Stomach (tissue), 19 donors: ENCODE measurements at regions of chr1 and their contacts with region 1.

Region 1: DNA sequence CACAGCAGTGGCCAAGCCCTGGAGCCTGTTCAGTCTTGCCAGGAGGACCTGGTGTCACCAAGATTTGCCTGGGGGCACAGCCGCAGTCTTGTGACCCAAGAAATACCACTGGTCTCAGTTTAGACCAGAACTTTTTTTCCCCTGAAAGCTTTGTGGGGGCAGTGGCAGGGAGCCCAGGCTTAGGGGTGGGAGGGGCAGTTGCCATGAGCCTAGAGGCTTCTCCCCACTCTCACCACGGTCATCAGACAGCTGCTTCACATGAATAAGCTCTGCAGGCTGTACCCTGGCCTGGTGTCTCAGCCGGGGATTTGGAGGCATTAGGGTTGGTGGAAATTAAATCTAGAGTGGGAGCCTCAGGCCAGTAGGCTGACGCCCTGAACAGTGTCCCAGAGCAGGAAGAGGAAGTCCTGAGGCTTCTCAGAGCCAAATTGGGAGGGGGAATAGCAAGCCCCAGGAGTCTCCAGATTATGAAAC is 73.7 kb downstream of the SLC16A1 start:
- DNase-seq: peak in 1 of 2 donors; percentile 29
- H3K4me3 ChIP-seq: no peak overlapping the region
- H3K27ac ChIP-seq: peak overlapping the region; percentile 61 to 79 (median 69)
- H3K4me1 ChIP-seq: peaks cover 8 to 18% (median 11%) of the 10 kb centered on the region in 4 donors
- H3K27me3 ChIP-seq: no peaks in the 10 kb centered on the region
- CTCF ChIP-seq: no peak
- EP300 ChIP-seq: no peak
- POLR2A ChIP-seq: no peak

Region 2: DNA sequence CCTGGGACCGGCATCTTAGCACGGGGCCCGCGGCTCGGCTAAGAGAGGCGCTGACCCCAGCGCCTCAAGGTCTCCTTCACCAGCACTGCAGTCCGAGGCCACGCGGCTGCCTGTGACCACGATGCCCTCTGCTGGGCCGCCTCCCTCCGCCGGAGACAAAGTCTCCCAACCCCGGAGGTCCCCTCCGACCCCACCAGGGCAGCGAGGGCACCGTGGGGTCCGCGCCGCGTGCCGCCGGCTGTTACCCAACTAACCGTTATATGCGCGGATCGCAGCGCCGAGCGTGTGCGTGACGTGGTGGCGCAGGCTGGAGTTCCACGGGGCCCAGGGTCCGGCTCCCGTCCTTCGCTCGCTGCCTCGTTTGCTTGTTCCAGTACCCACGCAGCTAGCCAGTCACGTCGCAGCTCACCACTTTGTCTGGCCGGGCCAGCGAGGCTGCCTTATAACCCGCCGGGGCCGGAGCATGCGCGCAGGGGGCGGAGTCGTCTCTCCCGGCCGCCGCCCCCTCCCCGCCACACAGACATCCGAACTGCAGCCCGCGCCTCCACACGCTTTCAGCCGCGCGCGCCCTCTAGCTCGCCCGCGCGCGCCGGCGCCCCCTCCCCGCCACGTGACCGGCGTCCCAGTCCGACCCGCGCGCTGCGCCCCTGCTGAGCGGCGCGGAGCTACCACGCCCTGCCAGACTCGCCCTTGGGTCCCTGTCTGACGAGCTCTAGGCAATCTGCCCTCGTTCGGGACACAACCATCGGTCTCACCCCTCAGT is 73.7 kb after region 1 on chr1 and contains the start of gene SLC16A1:
- intact Hi-C with region 1: loop called (anchors 10 kb)
- DNase-seq: peak; percentile 88 to 97
- H3K4me3 ChIP-seq: peak within 1 kb of the TSS; percentile 75 to 83 (median 80)
- H3K27ac ChIP-seq: peak within 1 kb of the TSS; percentile 64 to 94 (median 88)
- H3K4me1 ChIP-seq: peaks cover 0 to 77% (median 40%) of the 10 kb centered on the region in 4 donors
- H3K27me3 ChIP-seq: no peaks in the 10 kb centered on the region
- CTCF ChIP-seq: peak in 3 of 7 experiments; percentile 3 to 35 (median 24)
- EP300 ChIP-seq: no peak
- POLR2A ChIP-seq: peak in 2 of 4 donors; percentile 18 to 29
- total RNA-seq, gene SLC16A1: 12.5 to 127 (median 32.6) TPM

Region 3: DNA sequence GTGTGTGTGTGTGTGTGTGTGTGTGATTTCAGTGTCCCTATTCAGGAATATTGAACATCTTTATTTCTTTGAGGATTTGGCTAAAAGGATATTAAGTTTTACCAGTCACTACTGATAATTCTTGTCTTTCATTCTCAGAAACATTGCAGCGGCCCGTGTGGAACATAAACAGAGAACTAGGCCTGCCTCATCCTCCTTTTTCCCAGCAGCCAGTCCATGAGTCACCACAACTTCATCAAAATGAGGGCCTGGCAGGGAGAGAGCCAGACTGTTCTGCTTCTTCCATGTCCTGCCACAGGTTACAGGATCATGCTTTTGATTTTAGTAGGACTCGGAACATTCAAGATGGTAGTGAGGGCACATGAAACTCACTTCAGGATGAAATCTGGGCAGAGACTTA is 241.4 kb after region 1 on chr1:
- intact Hi-C with region 1: no loop called
- DNase-seq: no peak
- H3K4me3 ChIP-seq: no peak overlapping the region
- H3K27ac ChIP-seq: peak overlapping the region in 1 of 5 donors; percentile 27
- H3K4me1 ChIP-seq: peaks cover 0 to 13% (median 3%) of the 10 kb centered on the region in 4 donors
- H3K27me3 ChIP-seq: no peaks in the 10 kb centered on the region
- CTCF ChIP-seq: no peak
- EP300 ChIP-seq: no peak
- POLR2A ChIP-seq: no peak

Region 4: DNA sequence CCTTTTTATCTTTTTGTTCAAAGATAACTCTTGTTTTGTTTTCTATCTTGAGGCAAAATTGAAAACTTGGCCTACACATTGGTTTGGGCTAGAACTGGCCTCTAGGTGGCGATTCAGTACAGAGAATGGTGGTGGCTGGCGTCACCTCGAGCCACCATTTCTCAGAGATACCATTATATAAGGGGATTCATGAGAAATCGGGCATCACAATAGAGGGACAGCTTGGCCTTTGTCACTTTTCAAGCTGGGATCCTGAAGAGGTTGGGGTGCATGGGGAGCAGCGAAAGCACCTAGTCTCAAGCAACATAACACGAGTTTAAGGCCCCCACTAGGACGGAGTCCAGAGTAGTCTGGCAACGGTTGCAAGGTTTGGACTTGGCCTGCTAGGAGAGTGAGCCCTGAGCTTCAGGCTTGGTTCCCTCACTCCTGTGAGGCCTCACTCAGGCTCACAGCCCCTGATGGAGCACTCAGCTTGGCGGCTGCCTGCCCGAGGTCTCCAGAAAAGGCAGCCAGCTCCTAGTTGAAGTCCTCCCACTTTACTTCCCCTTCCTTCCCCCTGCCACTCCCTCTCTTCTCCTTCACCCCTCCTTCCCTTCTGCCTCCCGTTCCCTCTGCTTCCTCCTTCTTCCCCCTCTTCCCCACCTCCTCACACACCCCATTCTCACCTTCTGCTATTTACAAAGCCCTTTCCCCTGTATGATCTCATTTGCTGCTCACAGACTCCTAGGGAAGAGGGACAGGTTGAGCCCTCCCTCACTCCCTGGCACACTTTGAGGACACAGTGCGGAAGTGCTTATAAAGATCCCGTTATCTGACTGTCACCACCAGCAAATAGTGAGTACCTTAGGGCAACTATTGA is 258.5 kb after region 1 on chr1:
- intact Hi-C with region 1: no loop called
- DNase-seq: peak; percentile 70 to 89
- H3K4me3 ChIP-seq: peak overlapping the region in 1 of 4 donors; percentile 3
- H3K27ac ChIP-seq: peak overlapping the region; percentile 3 to 43 (median 16)
- H3K4me1 ChIP-seq: peaks cover 10 to 50% (median 30%) of the 10 kb centered on the region in 4 donors
- H3K27me3 ChIP-seq: no peaks in the 10 kb centered on the region
- CTCF ChIP-seq: peak in 5 of 7 experiments; percentile 64 to 87 (median 74)
- EP300 ChIP-seq: no peak
- POLR2A ChIP-seq: no peak